CD4-positive, alpha-beta T cell (primary cell): ENCODE measurements at regions of chr10 and their contacts with region 1.

Region 1: GRCh38 chr10:103966671-103967447 is at the start of gene SLK:
- DNase-seq: peak; percentile 59 to 96 (median 81)
- ATAC-seq: peak; percentile 82
- H3K4me3 ChIP-seq: peak within 1 kb of the TSS; percentile 94
- H3K4me3 Mint-ChIP-seq: peak within 1 kb of the TSS; percentile 95
- H3K27ac ChIP-seq: peak within 1 kb of the TSS; percentile 76 to 83
- H3K27ac Mint-ChIP-seq: peak within 1 kb of the TSS; percentile 91
- H3K4me1 ChIP-seq: peaks cover 13% of the 10 kb centered on the region
- H3K4me1 Mint-ChIP-seq: peaks cover 43% of the 10 kb centered on the region
- H3K27me3 ChIP-seq: no peaks in the 10 kb centered on the region
- H3K27me3 Mint-ChIP-seq: no peaks in the 10 kb centered on the region
- CTCF ChIP-seq: no peak
- total RNA-seq, gene SLK: 20.5 to 20.8 TPM

Region 2: DNA sequence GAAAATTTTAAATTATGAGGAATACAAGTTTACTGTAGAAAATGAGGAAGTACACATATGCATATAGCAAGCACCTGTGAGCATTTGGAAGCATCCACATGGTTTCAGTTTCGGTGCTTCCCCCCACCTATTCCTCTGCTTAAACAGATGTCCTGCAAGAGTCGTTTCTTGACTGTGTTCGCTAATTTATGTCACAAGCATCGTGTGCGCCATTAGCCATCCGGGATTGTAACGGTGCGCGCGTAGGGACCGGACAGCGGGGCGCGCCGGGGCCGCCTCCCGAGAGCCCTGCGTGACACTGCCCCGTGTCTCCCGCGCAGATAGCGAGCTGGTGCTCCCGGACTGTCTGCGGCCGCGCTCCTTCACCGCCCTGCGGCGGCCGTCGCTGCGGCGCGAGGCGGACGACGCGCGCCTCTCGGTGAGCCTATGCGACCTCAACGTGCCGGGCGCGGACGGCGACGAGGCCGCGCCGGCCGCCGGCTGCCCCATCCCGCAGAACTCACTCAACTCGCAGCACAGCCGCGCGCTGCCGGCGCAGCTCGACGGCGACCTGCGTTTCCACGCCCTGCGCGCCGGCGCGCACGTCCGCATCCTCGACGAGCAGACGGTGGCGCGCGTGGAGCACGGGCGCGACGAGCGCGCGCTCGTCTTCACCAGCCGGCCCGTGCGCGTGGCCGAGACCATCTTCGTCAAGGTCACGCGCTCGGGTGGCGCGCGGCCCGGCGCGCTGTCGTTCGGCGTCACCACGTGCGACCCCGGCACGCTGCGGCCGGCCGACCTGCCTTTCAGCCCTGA is 382.4 kb before region 1 on chr10:
- CTCF ChIA-PET with region 1: no interaction called
- POLR2A ChIA-PET with region 1: interaction called, 10 read pairs
- intact Hi-C with region 1: loop called (anchors 5 to 10 kb)
- DNase-seq: peak; percentile 50 to 93 (median 74)
- ATAC-seq: peak; percentile 70
- H3K4me3 ChIP-seq: peak overlapping the region; percentile 68
- H3K4me3 Mint-ChIP-seq: peak overlapping the region; percentile 96
- H3K27ac ChIP-seq: peak overlapping the region; percentile 53
- H3K27ac Mint-ChIP-seq: peak overlapping the region; percentile 96
- H3K4me1 ChIP-seq: peaks cover 13% of the 10 kb centered on the region
- H3K4me1 Mint-ChIP-seq: peaks cover 11% of the 10 kb centered on the region
- H3K27me3 ChIP-seq: no peaks in the 10 kb centered on the region
- H3K27me3 Mint-ChIP-seq: no peaks in the 10 kb centered on the region
- CTCF ChIP-seq: no peak

Region 3: GRCh38 chr10:103678178-103678526 is 288.7 kb before region 1 on chr10:
- CTCF ChIA-PET with region 1: no interaction called
- POLR2A ChIA-PET with region 1: no interaction called
- intact Hi-C with region 1: no loop called
- DNase-seq: peak; percentile 70 to 98 (median 83)
- ATAC-seq: peak; percentile 97
- H3K4me3 ChIP-seq: peak overlapping the region; percentile 62
- H3K4me3 Mint-ChIP-seq: peak overlapping the region; percentile 79
- H3K27ac ChIP-seq: peak overlapping the region; percentile 69 to 89
- H3K27ac Mint-ChIP-seq: peak overlapping the region; percentile 95
- H3K4me1 ChIP-seq: peaks cover 29% of the 10 kb centered on the region
- H3K4me1 Mint-ChIP-seq: peaks cover 16% of the 10 kb centered on the region
- H3K27me3 ChIP-seq: no peaks in the 10 kb centered on the region
- H3K27me3 Mint-ChIP-seq: no peaks in the 10 kb centered on the region
- CTCF ChIP-seq: no peak

Region 4: DNA sequence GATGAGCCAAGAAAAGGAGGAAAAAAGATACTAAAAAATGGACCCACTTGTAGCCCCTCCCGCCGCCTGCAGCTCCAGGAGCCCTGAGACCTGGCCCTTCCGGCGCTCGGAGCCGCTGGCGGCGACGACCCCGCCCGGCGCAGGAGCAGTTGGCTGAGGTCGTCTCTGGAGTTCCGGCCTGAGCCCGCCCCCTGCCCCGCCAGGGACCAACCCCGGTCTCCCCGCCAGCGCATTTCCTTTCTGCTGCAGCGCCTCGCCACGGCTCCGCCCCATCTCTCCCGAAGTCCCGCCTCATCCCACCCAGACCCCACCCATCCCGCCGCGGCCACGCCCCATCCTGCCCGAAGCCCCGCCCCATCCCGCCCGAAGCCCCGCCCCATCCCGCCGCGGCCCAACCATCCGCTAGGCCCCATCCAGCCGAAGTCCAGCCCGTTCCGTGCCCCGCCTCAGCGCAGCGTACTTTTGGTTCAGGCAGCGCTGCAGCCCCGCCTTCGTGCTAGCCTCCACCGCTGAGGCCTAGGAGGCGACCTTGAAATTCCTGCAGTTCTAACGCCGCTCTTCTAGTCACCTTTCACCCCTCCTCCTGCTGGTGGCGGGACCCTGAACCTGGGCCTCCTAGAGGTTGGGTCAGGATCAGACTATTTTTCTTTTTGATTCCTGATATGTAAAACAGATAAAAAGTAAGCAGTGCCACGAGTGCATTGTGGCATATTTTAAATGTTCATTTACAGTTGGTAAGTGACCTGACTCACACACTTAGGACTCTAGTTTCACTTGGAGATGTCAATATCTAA is 48.6 kb before region 1 on chr10 and contains the start of gene STN1:
- CTCF ChIA-PET with region 1: no interaction called
- POLR2A ChIA-PET with region 1: interaction called, 5 read pairs
- intact Hi-C with region 1: loop called (anchors 2 to 5 kb)
- DNase-seq: peak; percentile 88 to 97 (median 95)
- ATAC-seq: peak; percentile 93
- H3K4me3 ChIP-seq: peak within 1 kb of the TSS; percentile 83
- H3K4me3 Mint-ChIP-seq: peak within 1 kb of the TSS; percentile 94
- H3K27ac ChIP-seq: peak within 1 kb of the TSS; percentile 79 to 81
- H3K27ac Mint-ChIP-seq: peak within 1 kb of the TSS; percentile 93
- H3K4me1 ChIP-seq: peaks cover 56% of the 10 kb centered on the region
- H3K4me1 Mint-ChIP-seq: peaks cover 47% of the 10 kb centered on the region
- H3K27me3 ChIP-seq: no peaks in the 10 kb centered on the region
- H3K27me3 Mint-ChIP-seq: no peaks in the 10 kb centered on the region
- CTCF ChIP-seq: peak; percentile 20
- total RNA-seq, gene STN1: 13.0 to 13.4 TPM

Region 5: GRCh38 chr10:103983367-103983911 is 16.6 kb after region 1 on chr10:
- CTCF ChIA-PET with region 1: interaction called, 4 read pairs
- POLR2A ChIA-PET with region 1: interaction called, 10 read pairs
- intact Hi-C with region 1: loop called in 1 of 2 experiments (anchors 2 kb)
- DNase-seq: peak in 4 of 14 experiments; percentile 26 to 63 (median 56)
- ATAC-seq: peak; percentile 82
- H3K4me3 ChIP-seq: peak overlapping the region; percentile 0
- H3K4me3 Mint-ChIP-seq: peak overlapping the region; percentile 12
- H3K27ac ChIP-seq: peak overlapping the region; percentile 34 to 69
- H3K27ac Mint-ChIP-seq: peak overlapping the region; percentile 65
- H3K4me1 ChIP-seq: peaks cover 25% of the 10 kb centered on the region
- H3K4me1 Mint-ChIP-seq: peaks cover 72% of the 10 kb centered on the region
- H3K27me3 ChIP-seq: no peaks in the 10 kb centered on the region
- H3K27me3 Mint-ChIP-seq: no peaks in the 10 kb centered on the region
- CTCF ChIP-seq: no peak